Dendritic cell treated with granulocyte-macrophage colony-stimulating factor and Interleukin-4, amounts not matched to agents 40 ng/mL and 50 ng/mL, for 4 days (primary cell): ENCODE measurements at regions of chr2 and their contacts with region 1.

Region 1: GRCh38 chr2:156334496-156335478 is 2.3 kb upstream of the NR4A2 start:
- H3K4me3 Mint-ChIP-seq: peak overlapping the region; percentile 94
- H3K27ac Mint-ChIP-seq: peak overlapping the region; percentile 98
- H3K4me1 Mint-ChIP-seq: peaks cover 55% of the 10 kb centered on the region
- H3K27me3 Mint-ChIP-seq: peaks cover 10% of the 10 kb centered on the region

Region 2: GRCh38 chr2:156380117-156380645 is 45.4 kb after region 1 on chr2:
- intact Hi-C with region 1: no loop called
- H3K4me3 Mint-ChIP-seq: no peak overlapping the region
- H3K27ac Mint-ChIP-seq: no peak overlapping the region
- H3K4me1 Mint-ChIP-seq: no peaks in the 10 kb centered on the region
- H3K27me3 Mint-ChIP-seq: peaks cover 6% of the 10 kb centered on the region

Region 3: GRCh38 chr2:156589381-156590079 is 254.7 kb after region 1 on chr2:
- intact Hi-C with region 1: loop called (anchors 5 kb)
- H3K4me3 Mint-ChIP-seq: no peak overlapping the region
- H3K27ac Mint-ChIP-seq: no peak overlapping the region
- H3K4me1 Mint-ChIP-seq: no peaks in the 10 kb centered on the region
- H3K27me3 Mint-ChIP-seq: no peaks in the 10 kb centered on the region